ENCODE measurements at regions of chr4 and their contacts with region 1.

Region 1: DNA sequence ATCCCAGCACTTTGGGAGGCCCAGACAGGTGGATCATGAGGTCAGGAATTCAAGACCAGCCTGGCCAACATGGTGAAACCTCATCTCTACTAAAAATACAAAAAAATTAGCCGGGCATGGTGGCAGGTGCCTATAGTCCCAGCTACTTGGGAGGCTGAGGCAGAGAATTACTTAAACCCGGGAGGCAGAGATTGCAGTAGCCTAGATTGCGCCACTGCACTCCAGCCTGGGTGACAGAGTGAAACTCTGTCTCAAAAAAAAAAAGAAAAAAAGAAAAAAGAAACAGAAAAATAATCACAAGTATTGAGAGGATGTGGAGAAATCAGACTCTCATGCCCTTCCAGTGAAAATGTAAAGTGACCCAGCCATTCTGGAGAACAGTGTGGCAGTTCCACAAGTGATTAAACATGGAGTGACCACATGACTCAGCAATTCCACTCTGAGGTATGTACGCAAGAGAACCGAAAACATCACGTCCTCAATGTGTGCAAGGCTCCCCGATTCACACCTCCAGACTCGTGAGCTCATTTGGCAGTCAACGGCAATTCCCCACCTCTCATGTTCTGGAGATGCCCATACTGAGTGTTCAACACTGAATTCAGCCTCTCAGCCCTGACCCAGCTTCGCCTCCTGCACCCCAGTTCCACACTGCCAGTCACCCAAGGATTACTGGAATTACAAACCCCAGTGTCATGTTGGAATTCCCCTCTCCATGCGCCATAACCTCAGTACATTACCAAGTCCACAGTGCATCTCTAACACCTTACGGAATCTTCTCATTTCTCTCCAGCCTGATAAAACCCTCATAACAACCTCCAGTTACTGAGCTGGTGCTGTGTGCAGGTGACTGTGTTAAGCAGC is 21.1 kb downstream of the ACOX3 start:
- DNase-seq: peak; percentile 21
- H3K4me3 Mint-ChIP-seq: peak overlapping the region; percentile 0
- H3K27ac Mint-ChIP-seq: peak overlapping the region; percentile 92
- H3K4me1 Mint-ChIP-seq: peaks cover 18% of the 10 kb centered on the region
- H3K27me3 Mint-ChIP-seq: no peaks in the 10 kb centered on the region

Region 2: DNA sequence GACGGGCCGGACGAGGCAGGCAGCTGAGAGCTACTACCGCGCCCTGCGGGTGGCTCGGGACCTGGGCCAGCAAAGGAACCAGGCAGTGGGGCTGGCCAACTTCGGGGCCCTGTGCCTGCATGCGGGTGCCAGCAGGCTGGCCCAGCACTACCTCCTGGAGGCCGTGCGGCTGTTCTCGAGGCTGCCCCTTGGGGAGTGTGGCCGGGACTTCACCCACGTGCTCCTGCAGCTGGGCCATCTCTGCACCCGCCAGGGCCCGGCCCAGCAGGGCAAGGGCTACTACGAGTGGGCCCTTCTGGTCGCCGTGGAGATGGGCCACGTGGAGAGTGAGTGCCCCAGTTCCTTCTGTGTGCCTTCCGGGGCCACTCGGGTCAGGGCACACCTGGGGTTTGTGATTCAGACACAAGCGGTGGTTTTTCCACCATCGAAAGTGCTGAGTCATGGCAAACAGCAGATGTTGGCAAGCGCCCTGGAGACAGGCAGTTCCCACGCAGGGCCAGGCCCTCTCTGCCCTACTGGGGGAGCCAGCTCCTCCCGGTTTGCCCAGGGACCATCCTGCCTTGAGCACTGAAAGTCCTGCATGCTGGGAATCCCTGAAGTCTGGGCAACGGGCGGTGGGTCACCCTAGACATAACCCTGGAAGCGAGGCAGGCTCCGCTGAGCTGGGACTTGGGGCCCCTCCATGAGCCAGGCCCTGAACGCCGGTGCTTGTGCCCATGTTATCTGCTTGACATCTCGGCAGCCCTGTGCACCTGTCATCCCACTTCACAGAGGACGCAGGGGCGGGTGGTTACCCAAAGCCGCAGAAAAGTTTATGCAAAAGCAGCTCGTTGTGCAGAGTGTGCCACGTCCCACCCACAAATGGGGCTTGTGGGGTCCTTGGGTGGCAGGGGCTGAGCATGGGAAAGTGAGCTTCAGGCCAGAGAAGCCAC is 190.8 kb before region 1 on chr4:
- intact Hi-C with region 1: loop called (anchors 2 kb)
- DNase-seq: peak; percentile 56
- H3K4me3 Mint-ChIP-seq: no peak overlapping the region
- H3K27ac Mint-ChIP-seq: peak overlapping the region; percentile 65
- H3K4me1 Mint-ChIP-seq: peaks cover 14% of the 10 kb centered on the region
- H3K27me3 Mint-ChIP-seq: no peaks in the 10 kb centered on the region

Region 3: GRCh38 chr4:8383451-8384160 is 35.8 kb before region 1 on chr4:
- intact Hi-C with region 1: no loop called
- DNase-seq: no peak
- H3K4me3 Mint-ChIP-seq: no peak overlapping the region
- H3K27ac Mint-ChIP-seq: no peak overlapping the region
- H3K4me1 Mint-ChIP-seq: no peaks in the 10 kb centered on the region
- H3K27me3 Mint-ChIP-seq: no peaks in the 10 kb centered on the region